ENCODE measurements at regions of chr13 and their contacts with region 1.

Region 1: DNA sequence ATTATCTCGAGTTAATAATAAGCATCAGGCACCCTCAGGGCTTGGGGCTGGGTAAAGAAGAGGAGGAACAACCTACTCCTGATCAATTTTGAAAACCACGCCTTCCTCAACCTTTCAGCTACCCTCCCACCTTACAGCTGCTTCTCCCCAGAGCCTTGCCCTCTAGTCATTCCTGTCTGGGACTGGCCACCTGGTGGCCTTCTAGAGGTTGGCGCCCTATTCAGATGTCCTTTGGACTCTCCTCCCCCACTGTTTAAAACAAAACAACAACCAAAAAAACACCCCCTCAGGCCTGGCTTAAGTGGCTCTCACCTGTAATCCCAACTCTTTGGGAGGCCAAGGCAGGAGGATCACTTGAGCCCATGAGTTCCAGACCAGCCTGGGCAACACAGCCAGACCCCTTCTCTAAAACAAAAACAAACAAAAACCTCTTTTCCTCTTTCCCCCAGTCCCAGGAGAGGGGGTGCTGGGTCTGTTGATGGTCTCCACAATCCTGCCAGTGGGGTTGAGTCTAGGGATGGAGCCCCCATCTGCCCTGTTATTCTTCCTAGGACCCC is 62.3 kb downstream of the CCDC70 start:
- DNase-seq: peak; percentile 46
- ATAC-seq: peak; percentile 92
- H3K4me3 Mint-ChIP-seq: no peak overlapping the region
- H3K27ac Mint-ChIP-seq: no peak overlapping the region
- H3K4me1 Mint-ChIP-seq: no peaks in the 10 kb centered on the region
- H3K27me3 Mint-ChIP-seq: no peaks in the 10 kb centered on the region
- CTCF ChIP-seq: peak; percentile 39; the same call in 1 of the 2 replicates

Region 2: GRCh38 chr13:51895906-51896888 is 27.9 kb before region 1 on chr13:
- CTCF ChIA-PET with region 1: interaction called, 15 read pairs
- POLR2A ChIA-PET with region 1: no interaction called
- DNase-seq: peak; percentile 69
- ATAC-seq: peak; percentile 95
- H3K4me3 Mint-ChIP-seq: no peak overlapping the region
- H3K27ac Mint-ChIP-seq: no peak overlapping the region
- H3K4me1 Mint-ChIP-seq: peaks cover 11% of the 10 kb centered on the region
- H3K27me3 Mint-ChIP-seq: no peaks in the 10 kb centered on the region
- CTCF ChIP-seq: peak; percentile 27; the same call in 1 of the 2 replicates